ENCODE measurements at regions of chr7 and their contacts with region 1.

Region 1: GRCh38 chr7:151448261-151449252 is 8.6 kb upstream of the CRYGN start:
- DNase-seq: peak; percentile 89
- ATAC-seq: peak; percentile 90

Region 2: DNA sequence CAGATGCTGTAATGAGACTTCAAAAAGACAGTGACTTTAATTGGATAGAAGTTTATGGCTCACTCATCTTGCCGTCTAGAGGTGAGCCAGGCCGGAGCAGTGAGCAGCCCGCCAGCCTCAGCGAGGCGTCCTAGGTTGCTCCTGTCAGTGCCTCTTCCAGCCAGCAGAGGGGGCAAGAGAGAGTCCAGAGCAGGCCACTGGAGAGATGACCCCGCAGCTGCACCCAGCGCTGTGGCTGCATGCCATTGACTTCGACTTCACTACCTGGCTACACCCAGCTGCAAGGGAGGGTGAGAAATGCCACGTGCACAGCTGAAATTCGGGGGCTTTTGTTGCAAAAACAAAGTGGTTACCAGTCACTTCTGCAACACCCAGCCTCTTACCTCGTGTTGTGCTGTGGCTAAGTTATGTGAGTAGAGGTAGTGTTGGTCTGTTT is 80.4 kb before region 1 on chr7:
- intact Hi-C with region 1: loop called (anchors 2 kb)
- DNase-seq: peak; percentile 91
- ATAC-seq: peak; percentile 96